HEK293T (cell line): ENCODE measurements at regions of chr2 and their contacts with region 1.

Region 1: DNA sequence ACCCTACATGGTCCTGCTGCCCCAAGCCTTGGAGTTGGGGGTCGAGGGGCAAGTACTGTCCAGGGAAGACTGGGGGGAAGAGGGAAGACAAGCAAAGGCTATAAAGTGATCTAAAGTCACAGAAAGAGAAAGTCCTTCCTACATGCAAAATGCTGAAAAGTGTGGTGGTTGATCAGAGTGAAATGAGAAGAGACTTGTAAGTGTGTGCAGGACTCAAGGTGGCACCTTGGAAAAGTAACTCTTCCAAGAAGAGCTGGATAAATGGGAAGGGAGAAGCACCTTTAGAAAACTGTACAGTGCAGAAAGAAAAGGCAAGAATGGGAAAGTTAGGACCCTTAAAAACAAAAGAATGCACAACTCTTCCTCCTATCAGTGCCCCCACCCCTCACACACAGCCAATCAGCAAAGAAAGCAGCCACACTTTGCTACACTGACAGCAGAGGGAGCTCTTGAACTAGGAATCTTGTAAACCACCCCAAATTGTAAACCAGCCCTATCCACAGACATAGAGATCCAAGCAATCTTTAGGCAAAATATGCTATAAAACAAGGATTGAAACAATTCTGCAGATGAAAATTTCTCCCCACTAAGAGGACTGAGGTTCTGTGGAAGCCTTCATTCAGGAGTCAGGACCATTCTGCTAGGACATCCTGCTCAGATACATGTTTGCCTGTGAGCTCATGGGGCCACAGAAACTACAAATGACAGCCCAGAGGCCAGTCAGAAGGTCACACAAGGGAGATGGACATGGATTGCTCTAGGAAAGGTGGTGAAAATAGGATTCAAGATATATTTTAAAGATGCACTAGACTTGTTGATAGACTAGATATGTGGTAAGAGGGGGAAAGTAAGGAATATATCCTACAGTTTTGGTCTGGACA is 146.4 kb downstream of the FTCDNL1 start:
- DNase-seq: peak; percentile 68

Region 2: GRCh38 chr2:199739413-199740110 is 35.0 kb after region 1 on chr2:
- CTCF ChIA-PET with region 1: interaction called, 27 read pairs
- POLR2A ChIA-PET with region 1: no interaction called
- DNase-seq: peak; percentile 71